ENCODE measurements at regions of chr2 and their contacts with region 1.

Region 1: GRCh38 chr2:198309673-198310280 is 505.4 kb downstream of the PLCL1 start:
- DNase-seq: peak; percentile 61
- H3K4me3 ChIP-seq: no peak overlapping the region
- H3K27ac ChIP-seq: no peak overlapping the region
- H3K4me1 ChIP-seq: no peaks in the 10 kb centered on the region
- H3K27me3 ChIP-seq: peaks cover 14 to 27% of the 10 kb centered on the region in 2 experiments
- CTCF ChIP-seq: peak; percentile 71
- POLR2A ChIP-seq: no peak

Region 2: GRCh38 chr2:198337368-198337767 is 27.6 kb after region 1 on chr2:
- CTCF ChIA-PET with region 1: interaction called, 24 read pairs
- POLR2A ChIA-PET with region 1: no interaction called
- dilution Hi-C with region 1: no loop called
- intact Hi-C with region 1: no loop called
- DNase-seq: no peak
- H3K4me3 ChIP-seq: no peak overlapping the region
- H3K27ac ChIP-seq: no peak overlapping the region
- H3K4me1 ChIP-seq: no peaks in the 10 kb centered on the region
- H3K27me3 ChIP-seq: peaks cover 0 to 2% of the 10 kb centered on the region in 2 experiments
- CTCF ChIP-seq: no peak
- POLR2A ChIP-seq: no peak

Region 3: DNA sequence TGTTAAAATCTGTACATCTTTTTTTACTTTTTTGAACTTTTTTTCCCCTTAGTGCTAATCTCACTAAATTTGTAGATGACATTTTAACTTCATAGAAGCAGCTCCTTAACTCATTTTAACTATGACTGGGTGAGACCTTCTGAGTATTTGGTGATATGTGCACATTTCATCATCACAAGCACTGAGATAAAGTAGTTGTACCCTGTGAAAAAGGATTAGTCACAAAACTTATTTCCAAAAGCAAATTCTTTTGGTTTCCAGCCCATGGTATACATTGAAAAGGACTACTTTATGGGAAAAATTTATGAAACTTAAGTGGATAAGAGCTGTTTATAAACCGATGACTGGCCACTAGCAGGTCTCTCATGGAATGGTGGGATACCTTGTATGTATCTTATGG is 76.1 kb after region 1 on chr2:
- CTCF ChIA-PET with region 1: no interaction called
- POLR2A ChIA-PET with region 1: no interaction called
- dilution Hi-C with region 1: no loop called
- intact Hi-C with region 1: no loop called
- DNase-seq: no peak
- H3K4me3 ChIP-seq: no peak overlapping the region
- H3K27ac ChIP-seq: no peak overlapping the region
- H3K4me1 ChIP-seq: no peaks in the 10 kb centered on the region
- H3K27me3 ChIP-seq: no peaks in the 10 kb centered on the region
- CTCF ChIP-seq: no peak
- POLR2A ChIP-seq: no peak

Region 4: DNA sequence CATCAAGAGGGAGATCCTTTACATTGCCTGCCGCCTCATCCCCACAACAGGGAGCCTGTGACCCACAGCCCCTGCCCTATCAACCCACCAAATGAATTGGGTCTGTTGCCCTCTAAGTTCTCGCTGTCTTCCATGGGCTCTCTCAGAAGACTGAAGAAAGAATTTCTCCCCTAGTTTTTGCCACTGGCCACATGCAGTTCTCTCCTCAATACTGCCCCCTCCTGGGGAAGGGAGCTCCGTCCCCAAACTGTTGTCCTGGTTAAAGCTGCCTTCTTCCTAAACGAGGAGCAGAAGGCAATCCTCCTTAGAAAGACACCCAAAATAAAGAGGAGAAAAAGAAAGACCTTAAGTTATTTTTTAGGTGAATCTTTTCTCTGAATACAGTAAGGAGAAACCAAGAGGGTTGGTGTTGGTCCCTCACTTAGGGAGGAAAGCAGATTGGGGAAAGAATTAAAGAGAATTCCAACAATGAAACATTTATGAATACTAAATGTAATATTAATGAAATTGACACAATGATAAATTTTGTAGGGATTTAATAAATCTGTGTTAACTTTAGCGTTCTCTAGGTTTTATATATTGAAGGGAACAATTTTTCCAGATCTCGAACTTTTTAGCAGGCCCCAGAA is 1179.1 kb after region 1 on chr2:
- CTCF ChIA-PET with region 1: interaction called, 317 read pairs
- POLR2A ChIA-PET with region 1: interaction called, 3 read pairs
- dilution Hi-C with region 1: no loop called
- intact Hi-C with region 1: loop called (anchors 1 kb)
- DNase-seq: peak; percentile 61
- H3K4me3 ChIP-seq: no peak overlapping the region
- H3K27ac ChIP-seq: no peak overlapping the region
- H3K4me1 ChIP-seq: no peaks in the 10 kb centered on the region
- H3K27me3 ChIP-seq: no peaks in the 10 kb centered on the region
- CTCF ChIP-seq: peak; percentile 79 to 81
- POLR2A ChIP-seq: no peak

Region 5: GRCh38 chr2:199734011-199734410 is 1424.2 kb after region 1 on chr2:
- CTCF ChIA-PET with region 1: interaction called, 120 read pairs
- POLR2A ChIA-PET with region 1: no interaction called
- dilution Hi-C with region 1: no loop called
- intact Hi-C with region 1: no loop called
- DNase-seq: no peak
- H3K4me3 ChIP-seq: no peak overlapping the region
- H3K27ac ChIP-seq: no peak overlapping the region
- H3K4me1 ChIP-seq: no peaks in the 10 kb centered on the region
- H3K27me3 ChIP-seq: peaks cover 5 to 7% of the 10 kb centered on the region in 2 experiments
- CTCF ChIP-seq: no peak
- POLR2A ChIP-seq: no peak

Region 6: GRCh38 chr2:199861132-199861774 is 1551.5 kb after region 1 on chr2:
- CTCF ChIA-PET with region 1: interaction called, 5 read pairs
- POLR2A ChIA-PET with region 1: no interaction called
- dilution Hi-C with region 1: no loop called
- intact Hi-C with region 1: loop called (anchors 10 kb)
- DNase-seq: peak; percentile 27
- H3K4me3 ChIP-seq: no peak overlapping the region
- H3K27ac ChIP-seq: no peak overlapping the region
- H3K4me1 ChIP-seq: no peaks in the 10 kb centered on the region
- H3K27me3 ChIP-seq: peaks cover 8 to 9% of the 10 kb centered on the region in 2 experiments
- CTCF ChIP-seq: peak; percentile 22 to 33
- POLR2A ChIP-seq: no peak

Measured in endothelial cell of umbilical vein (primary cell).